Activated T-helper 2 cell treated with anti-CD3 and anti-CD28 coated beads, Interferon-gamma antibody, Interleukin-2, Interleukin-4, amounts not matched to agents 10 μg/mL and 5 μg/mL and 100 μg/mL, durations not matched to agents 14 hours and 24 hours and 36 hours (primary cell): ENCODE measurements at regions of chr11 and their contacts with region 1.

Region 1: DNA sequence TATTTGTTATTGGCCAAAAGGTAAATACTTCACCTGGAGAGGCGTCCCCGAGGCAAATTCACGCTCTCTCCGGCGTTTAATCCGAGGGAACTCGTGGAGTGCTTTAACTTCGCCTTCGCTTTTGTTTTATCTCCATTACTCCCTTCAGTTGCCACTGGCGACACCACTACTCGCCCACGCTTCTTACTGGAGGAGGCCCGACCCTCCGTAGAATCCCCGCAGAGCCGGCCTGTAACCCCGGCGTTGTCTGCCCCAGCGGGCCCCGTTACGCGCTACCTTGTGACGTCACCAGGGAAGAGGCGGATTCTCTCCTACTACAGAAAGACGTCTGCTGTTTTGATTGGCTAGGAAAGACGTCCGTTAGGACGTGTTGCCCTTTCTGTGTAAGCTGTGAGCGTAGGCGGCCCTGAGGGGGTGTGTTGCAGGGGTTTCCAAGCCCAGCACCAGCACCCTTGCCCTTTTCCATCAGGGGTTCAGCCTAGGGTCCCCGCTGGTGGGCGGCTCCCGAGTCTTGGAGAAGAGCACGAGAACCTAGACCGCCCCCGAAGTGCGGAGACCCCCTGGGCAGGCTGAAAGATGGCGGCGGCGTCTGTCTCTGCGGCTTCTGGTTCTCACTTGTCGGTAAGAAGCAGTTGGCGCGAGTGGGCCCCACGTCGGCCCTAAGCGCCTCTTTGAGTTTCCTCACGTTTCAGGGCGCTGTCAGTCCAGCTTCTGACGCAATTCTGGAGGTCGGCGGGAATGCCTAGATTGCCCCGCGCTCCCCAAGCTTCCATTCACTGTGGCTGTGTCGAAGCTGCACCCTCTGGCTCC is at the start of gene CEP57:
- DNase-seq: peak; percentile 92
- H3K4me3 Mint-ChIP-seq: peak within 1 kb of the TSS; percentile 98
- H3K27ac Mint-ChIP-seq: peak within 1 kb of the TSS; percentile 100
- H3K4me1 Mint-ChIP-seq: peaks cover 52% of the 10 kb centered on the region
- H3K27me3 Mint-ChIP-seq: no peaks in the 10 kb centered on the region
- total RNA-seq, gene CEP57: 88.3 and 94.5 TPM in 2 replicates

Region 2: GRCh38 chr11:94400839-94401772 is 1389.2 kb before region 1 on chr11 and contains the start of gene GPR83:
- intact Hi-C with region 1: no loop called
- DNase-seq: no peak
- H3K4me3 Mint-ChIP-seq: peak within 1 kb of the TSS; percentile 22
- H3K27ac Mint-ChIP-seq: no peak within 1 kb of the TSS
- H3K4me1 Mint-ChIP-seq: peaks cover 3% of the 10 kb centered on the region
- H3K27me3 Mint-ChIP-seq: peaks cover 44% of the 10 kb centered on the region
- total RNA-seq, gene GPR83: 0.05 TPM in 1 of 2 replicates, not detected in the other

Region 3: DNA sequence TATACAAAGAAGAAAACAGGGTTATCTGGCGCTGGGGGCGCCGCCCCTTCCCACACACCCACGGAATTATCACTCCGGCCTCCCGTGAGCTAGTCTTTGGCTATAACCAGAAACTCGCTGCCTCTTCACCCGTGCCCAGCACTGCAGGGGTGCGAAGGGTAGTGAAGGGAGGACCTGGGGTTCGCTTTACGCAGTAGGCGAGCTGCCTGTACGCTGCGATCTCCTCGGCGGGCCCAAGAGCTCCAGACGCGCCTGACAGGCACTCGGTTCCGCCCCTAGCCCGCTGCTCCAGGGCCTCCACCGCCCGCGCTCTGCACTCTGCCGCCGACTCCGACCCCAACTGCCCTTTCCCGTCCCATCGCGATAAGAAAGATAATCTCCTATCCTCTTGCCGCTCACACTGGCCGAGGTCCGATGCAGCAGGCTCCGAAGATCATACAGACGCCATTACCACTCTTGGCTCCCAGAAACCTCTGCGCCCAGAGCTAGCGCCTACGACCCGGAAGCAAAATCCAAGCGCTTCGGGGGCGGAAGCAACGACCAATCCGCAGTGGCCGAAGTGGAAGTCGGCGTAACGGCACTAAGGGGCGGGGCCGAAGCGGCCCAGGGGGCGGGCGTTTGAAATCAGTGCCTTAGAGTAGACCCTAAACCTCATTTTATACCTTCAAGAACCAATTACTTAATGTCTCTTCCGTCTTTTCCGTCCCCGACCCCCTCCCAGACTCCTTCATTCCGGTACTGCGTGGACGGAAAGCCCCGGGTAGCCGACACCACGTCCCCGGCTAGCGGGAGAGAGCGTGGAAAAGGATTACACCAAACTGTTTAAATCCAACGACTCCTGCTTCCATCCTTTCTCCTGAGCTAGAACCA is 817.0 kb before region 1 on chr11 and contains the starts of genes CWC15 and KDM4D:
- intact Hi-C with region 1: loop called (anchors 1 kb)
- DNase-seq: peak; percentile 91
- H3K4me3 Mint-ChIP-seq: peak within 1 kb of the TSS; percentile 95
- H3K27ac Mint-ChIP-seq: peak within 1 kb of the TSS; percentile 91
- H3K4me1 Mint-ChIP-seq: peaks cover 28% of the 10 kb centered on the region
- H3K27me3 Mint-ChIP-seq: no peaks in the 10 kb centered on the region
- total RNA-seq, gene CWC15: 86.1 and 94.4 TPM in 2 replicates
- total RNA-seq, gene KDM4D: 0.48 and 0.84 TPM in 2 replicates

Region 4: GRCh38 chr11:95089620-95090542 is 700.4 kb before region 1 on chr11 and contains the start of gene ENDOD1:
- intact Hi-C with region 1: loop called (anchors 1 kb)
- DNase-seq: peak; percentile 85
- H3K4me3 Mint-ChIP-seq: peak within 1 kb of the TSS; percentile 88
- H3K27ac Mint-ChIP-seq: peak within 1 kb of the TSS; percentile 95
- H3K4me1 Mint-ChIP-seq: peaks cover 66% of the 10 kb centered on the region
- H3K27me3 Mint-ChIP-seq: no peaks in the 10 kb centered on the region
- total RNA-seq, gene ENDOD1: 33.7 and 34.9 TPM in 2 replicates

Region 5: GRCh38 chr11:95829580-95830259 is 39.4 kb after region 1 on chr11:
- intact Hi-C with region 1: loop called (anchors 5 kb)
- DNase-seq: no peak
- H3K4me3 Mint-ChIP-seq: no peak overlapping the region
- H3K27ac Mint-ChIP-seq: peak overlapping the region; percentile 70
- H3K4me1 Mint-ChIP-seq: peaks cover 5% of the 10 kb centered on the region
- H3K27me3 Mint-ChIP-seq: no peaks in the 10 kb centered on the region

Region 6: GRCh38 chr11:96001037-96001436 is 210.7 kb after region 1 on chr11:
- intact Hi-C with region 1: no loop called
- DNase-seq: no peak
- H3K4me3 Mint-ChIP-seq: no peak overlapping the region
- H3K27ac Mint-ChIP-seq: no peak overlapping the region
- H3K4me1 Mint-ChIP-seq: no peaks in the 10 kb centered on the region
- H3K27me3 Mint-ChIP-seq: no peaks in the 10 kb centered on the region

Region 7: DNA sequence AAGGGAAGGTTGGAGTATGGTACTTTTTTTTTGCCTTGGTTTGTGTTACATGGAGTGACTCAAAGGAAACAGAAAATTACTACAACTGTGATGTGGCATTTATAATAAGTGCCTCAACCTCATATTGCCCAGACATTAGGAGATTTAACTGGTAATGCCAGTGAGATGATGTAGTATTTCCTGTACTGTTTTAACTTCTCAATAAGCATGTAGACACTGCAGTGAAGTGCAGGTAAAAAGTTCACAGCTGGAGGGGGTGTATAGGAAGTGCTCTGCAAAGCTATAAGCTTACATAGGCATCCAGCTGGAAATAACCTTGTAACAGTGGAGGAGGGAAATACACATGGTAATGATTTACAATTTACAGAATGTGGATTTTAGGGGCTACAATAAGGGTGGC is 271.8 kb after region 1 on chr11:
- intact Hi-C with region 1: loop called (anchors 5 kb)
- DNase-seq: no peak
- H3K4me3 Mint-ChIP-seq: peak overlapping the region; percentile 34
- H3K27ac Mint-ChIP-seq: peak overlapping the region; percentile 92
- H3K4me1 Mint-ChIP-seq: peaks cover 53% of the 10 kb centered on the region
- H3K27me3 Mint-ChIP-seq: no peaks in the 10 kb centered on the region

Region 8: DNA sequence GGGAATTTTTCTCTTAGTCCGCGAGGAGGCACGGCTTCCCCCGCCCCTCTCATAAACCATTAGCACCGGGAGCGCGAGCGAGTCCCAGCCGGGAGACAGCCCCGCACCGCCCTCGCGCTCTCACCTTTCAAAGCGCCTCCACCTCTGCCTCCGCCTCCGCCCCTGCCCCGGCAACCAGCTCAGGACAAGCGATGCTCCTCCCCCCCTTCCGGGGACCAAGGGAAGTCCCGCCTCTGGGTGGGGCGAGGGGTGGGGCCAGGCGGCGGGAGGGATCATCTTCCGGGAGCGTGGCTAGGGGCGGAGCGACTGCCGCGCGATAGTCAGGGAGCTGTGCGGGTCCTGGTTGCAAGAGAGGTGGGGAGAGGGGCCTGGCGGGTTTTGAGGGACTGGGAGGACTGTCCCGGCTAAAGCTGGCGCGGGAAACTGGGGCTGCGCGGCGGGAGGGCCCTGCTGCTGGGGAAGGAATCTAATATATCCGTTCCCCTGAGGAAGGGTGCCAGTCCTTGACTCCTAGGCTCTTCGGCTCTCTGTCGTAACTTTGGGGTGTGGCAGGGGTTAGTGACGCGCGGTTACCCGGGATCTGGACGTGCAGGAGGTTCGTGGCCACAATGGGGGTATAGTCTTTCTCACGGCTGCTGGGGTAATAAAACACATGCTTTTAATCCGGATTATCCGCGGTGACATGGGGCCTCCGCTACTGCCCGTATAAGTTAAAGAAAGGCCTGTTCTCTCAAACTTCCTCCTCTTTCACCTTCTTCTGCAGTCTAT is 599.6 kb after region 1 on chr11 and contains the starts of genes CCDC82 and JRKL:
- intact Hi-C with region 1: loop called (anchors 1 kb)
- DNase-seq: peak; percentile 96
- H3K4me3 Mint-ChIP-seq: peak within 1 kb of the TSS; percentile 94
- H3K27ac Mint-ChIP-seq: peak within 1 kb of the TSS; percentile 86
- H3K4me1 Mint-ChIP-seq: peaks cover 50% of the 10 kb centered on the region
- H3K27me3 Mint-ChIP-seq: no peaks in the 10 kb centered on the region
- total RNA-seq, gene CCDC82: 35.4 and 38.6 TPM in 2 replicates
- total RNA-seq, gene JRKL: 11.8 and 12.9 TPM in 2 replicates